Heart right ventricle (tissue), 16 donors: ENCODE measurements at regions of chr11 and their contacts with region 1.

Region 1: GRCh38 chr11:7353100-7353499 is 101.4 kb downstream of the SYT9 start:
- DNase-seq: peak in 1 of 2 donors; percentile 7
- ATAC-seq: no peak
- H3K4me3 ChIP-seq: no peak overlapping the region
- H3K27ac ChIP-seq: no peak overlapping the region
- H3K4me1 ChIP-seq: no peaks in the 10 kb centered on the region
- H3K27me3 ChIP-seq: no peaks in the 10 kb centered on the region
- CTCF ChIP-seq: peak in 6 of 9 donors; percentile 28 to 50 (median 38)

Region 2: GRCh38 chr11:7307836-7308235 is 45.3 kb before region 1 on chr11:
- intact Hi-C with region 1: no loop called
- DNase-seq: no peak
- ATAC-seq: no peak
- H3K4me3 ChIP-seq: no peak overlapping the region
- H3K27ac ChIP-seq: no peak overlapping the region
- H3K4me1 ChIP-seq: no peaks in the 10 kb centered on the region
- H3K27me3 ChIP-seq: no peaks in the 10 kb centered on the region
- CTCF ChIP-seq: no peak

Region 3: GRCh38 chr11:7672960-7673723 is 320.0 kb after region 1 on chr11 and contains the start of gene CYB5R2:
- intact Hi-C with region 1: loop called in 1 of 10 experiments (anchors 10 kb)
- DNase-seq: peak; percentile 74 to 75
- ATAC-seq: peak; percentile 73 to 93 (median 90)
- H3K4me3 ChIP-seq: peak within 1 kb of the TSS; percentile 26 to 64 (median 61)
- H3K27ac ChIP-seq: peak within 1 kb of the TSS in 8 of 10 donors; percentile 30 to 79 (median 61)
- H3K4me1 ChIP-seq: peaks cover 4 to 22% (median 12%) of the 10 kb centered on the region in 9 donors
- H3K27me3 ChIP-seq: peaks cover 0 to 50% (median 33%) of the 10 kb centered on the region in 7 donors
- CTCF ChIP-seq: no peak
- total RNA-seq, gene CYB5R2: 0.36 to 1.7 (median 1.1) TPM